ENCODE measurements at regions of chr1 and their contacts with region 1.

Region 1: DNA sequence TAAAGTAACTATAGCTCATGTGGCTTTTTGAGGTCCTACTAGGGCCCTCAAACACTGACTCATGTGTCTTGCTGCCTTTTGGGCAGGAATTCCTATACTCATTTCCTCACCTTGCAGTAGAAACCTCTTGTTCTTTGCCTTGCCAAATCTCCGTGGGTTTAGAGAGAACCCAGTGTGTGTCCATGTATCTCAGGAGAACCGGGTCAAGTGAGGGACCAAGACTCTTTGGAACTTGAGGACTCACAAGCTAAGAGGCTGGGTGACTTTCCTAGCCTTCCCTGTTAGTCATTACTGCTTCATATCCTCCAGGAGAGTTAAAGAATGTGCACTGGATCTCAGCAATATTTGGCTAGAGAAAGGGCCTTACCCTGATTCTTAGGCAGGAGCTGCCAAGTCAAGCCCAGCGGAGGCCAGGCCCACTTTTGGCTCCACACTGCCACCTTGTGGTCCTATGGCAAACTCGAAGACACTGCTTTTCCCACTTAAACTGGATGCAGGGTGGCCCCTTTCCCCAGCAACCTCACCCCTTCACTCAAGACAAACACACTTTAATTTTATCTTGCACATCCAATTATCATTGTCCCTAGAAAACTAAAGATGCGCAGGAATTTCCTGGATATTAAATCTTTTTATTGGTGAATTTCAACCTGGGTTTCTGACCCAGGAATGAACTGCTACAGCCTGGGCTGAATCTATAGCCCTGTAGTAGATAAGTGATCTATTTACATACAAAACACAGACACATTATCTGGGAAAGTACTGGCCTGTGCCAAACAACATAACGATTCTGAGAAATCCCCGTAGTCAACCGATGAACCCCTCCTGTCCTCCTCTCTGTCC is 10.6 kb downstream of the AVPR1B start:
- DNase-seq: peak; percentile 77 to 91 (median 83)
- H3K4me3 ChIP-seq: no peak overlapping the region
- H3K27ac ChIP-seq: no peak overlapping the region
- H3K4me1 ChIP-seq: no peaks in the 10 kb centered on the region
- H3K27me3 ChIP-seq: peaks cover 5% of the 10 kb centered on the region
- CTCF ChIP-seq: peak; percentile 79 to 90 (median 83)
- POLR2A ChIP-seq: no peak

Region 2: GRCh38 chr1:205791568-205792180 is 314.9 kb before region 1 on chr1:
- intact Hi-C with region 1: loop called in 1 of 2 experiments (anchors 10 kb)
- DNase-seq: peak; percentile 60 to 88 (median 68)
- H3K4me3 ChIP-seq: no peak overlapping the region
- H3K27ac ChIP-seq: no peak overlapping the region
- H3K4me1 ChIP-seq: no peaks in the 10 kb centered on the region
- H3K27me3 ChIP-seq: no peaks in the 10 kb centered on the region
- CTCF ChIP-seq: peak; percentile 54 to 86 (median 76)
- POLR2A ChIP-seq: no peak

Region 3: DNA sequence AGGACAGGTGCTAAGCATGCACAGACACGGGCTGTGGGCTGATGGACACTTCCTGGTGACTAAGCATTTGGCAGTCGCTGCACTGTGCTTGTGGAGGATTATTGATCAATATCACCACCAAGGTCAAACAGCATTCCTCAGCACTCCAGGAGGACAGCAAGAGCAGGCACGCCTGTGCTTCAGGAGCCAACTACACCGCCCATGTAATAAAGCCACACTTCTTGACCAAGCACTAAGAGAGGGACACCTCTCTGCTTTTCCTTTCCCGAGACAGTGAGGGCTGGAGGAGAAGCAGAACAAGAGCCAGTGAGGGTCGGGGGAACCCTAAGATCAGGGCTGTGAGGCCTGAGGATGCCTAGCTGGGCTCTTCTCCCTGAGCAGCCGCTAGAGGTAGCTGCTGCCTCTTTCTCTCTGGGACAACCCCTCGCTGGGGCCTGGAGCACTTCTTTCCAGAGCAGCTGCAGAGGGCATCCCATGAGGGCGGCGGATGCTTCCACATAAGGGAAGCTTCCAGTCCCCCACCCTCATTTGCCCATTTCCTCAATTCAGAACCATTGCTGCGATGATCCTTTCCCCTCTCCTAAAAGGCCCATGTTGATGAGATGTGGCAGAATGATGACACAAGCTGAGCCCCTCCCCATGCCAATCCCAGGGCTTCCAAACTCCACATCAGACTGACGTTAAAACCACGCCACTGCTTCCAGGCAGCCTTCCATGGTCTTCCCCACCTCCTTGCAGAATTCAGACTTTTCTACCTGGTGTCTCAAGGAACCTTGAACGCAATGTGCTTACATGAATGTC is 122.4 kb before region 1 on chr1:
- intact Hi-C with region 1: loop called (anchors 2 to 5 kb)
- DNase-seq: peak; percentile 73 to 95 (median 93)
- H3K4me3 ChIP-seq: no peak overlapping the region
- H3K27ac ChIP-seq: peak overlapping the region in 2 of 5 donors; percentile 36 to 71
- H3K4me1 ChIP-seq: peaks cover 4 to 9% of the 10 kb centered on the region in 2 donors
- H3K27me3 ChIP-seq: no peaks in the 10 kb centered on the region
- CTCF ChIP-seq: peak; percentile 42 to 72 (median 67)
- POLR2A ChIP-seq: peak in 1 of 2 donors; percentile 31

Region 4: DNA sequence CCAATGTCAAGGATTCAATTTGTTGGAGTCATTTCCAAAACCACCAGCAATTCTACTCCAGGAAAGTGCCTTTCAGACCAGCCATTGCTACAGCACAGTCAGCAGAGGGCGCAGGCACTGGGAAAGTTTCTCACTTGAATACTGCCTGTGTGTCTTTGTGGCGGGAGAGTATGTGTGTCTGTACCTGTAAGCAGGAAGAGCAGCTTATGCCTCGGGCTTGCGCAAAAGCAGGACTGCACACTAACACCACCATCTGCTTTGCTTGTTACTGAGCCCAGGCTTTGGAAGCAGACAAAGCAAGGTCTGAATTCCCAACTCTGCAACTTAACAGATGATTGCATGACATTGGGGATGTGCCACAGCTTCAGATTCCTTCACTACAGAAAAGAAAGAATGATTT is 75.8 kb before region 1 on chr1:
- intact Hi-C with region 1: loop called (anchors 5 to 10 kb)
- DNase-seq: peak; percentile 55 to 80 (median 72)
- H3K4me3 ChIP-seq: no peak overlapping the region
- H3K27ac ChIP-seq: no peak overlapping the region
- H3K4me1 ChIP-seq: peaks cover 0 to 7% of the 10 kb centered on the region in 2 donors
- H3K27me3 ChIP-seq: peaks cover 28% of the 10 kb centered on the region
- CTCF ChIP-seq: peak; percentile 68 to 73 (median 72)
- POLR2A ChIP-seq: no peak

Measured in adrenal gland (tissue), 19 donors.